Transverse colon (tissue), 4 donors: ENCODE measurements at regions of chr18 and their contacts with region 1.

Region 1: GRCh38 chr18:67788310-67789164 is 272.0 kb upstream of the DSEL start:
- DNase-seq: no peak
- H3K4me3 ChIP-seq: no peak overlapping the region
- H3K27ac ChIP-seq: no peak overlapping the region
- H3K4me1 ChIP-seq: no peaks in the 10 kb centered on the region
- H3K27me3 ChIP-seq: no peaks in the 10 kb centered on the region
- CTCF ChIP-seq: no peak
- EP300 ChIP-seq: no peak
- POLR2A ChIP-seq: no peak

Region 2: GRCh38 chr18:69067047-69067446 is 1278.5 kb after region 1 on chr18:
- in situ Hi-C with region 1: no loop called
- intact Hi-C with region 1: loop called (anchors 5 kb)
- DNase-seq: no peak
- H3K4me3 ChIP-seq: no peak overlapping the region
- H3K27ac ChIP-seq: no peak overlapping the region
- H3K4me1 ChIP-seq: no peaks in the 10 kb centered on the region
- H3K27me3 ChIP-seq: no peaks in the 10 kb centered on the region
- CTCF ChIP-seq: no peak
- EP300 ChIP-seq: no peak
- POLR2A ChIP-seq: no peak